Psoas muscle (tissue), 8 donors: ENCODE measurements at regions of chr13 and their contacts with region 1.

Region 1: DNA sequence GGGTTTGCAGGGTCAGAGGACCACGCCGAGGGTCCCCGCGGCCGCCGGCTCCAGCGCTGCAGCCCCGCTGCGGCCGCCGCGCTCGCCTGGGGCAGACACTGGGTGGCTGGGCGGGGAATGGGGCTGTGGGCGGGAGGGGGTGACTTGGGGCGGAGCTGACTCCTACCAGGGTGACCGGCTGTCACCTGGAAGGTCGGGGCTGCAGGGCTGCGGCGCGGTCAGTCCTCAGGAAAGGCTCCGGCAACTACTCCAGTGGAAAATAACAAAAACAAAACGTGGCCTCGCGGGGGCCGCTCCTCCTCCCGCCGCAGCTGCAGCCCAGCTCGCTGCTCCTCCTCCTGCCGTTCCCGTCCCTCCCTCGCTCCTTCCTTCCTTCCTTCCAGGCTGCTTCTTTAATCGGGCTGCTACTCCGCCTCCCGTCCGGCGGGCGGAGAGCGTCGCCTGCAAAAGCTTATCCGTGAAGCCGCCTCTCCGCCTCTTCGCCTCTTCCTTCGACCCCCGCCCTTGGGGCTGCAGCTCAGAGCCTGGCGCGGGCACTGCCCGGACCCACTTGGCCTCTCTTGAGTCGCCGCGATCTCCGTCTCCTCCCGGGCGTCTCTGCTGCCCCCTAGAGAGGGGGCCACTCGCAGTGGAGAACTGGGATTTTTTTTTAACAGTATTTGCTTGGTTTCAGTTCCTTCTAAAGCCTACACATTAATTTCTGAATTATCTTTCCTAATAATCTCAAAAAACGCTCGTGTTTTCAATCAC is at the start of gene TBC1D4:
- DNase-seq: peak; percentile 84 to 94
- ATAC-seq: peak; percentile 78 to 87 (median 80)
- H3K4me3 ChIP-seq: peak within 1 kb of the TSS; percentile 96
- H3K27ac ChIP-seq: peak within 1 kb of the TSS; percentile 96
- H3K4me1 ChIP-seq: peaks cover 29% of the 10 kb centered on the region
- H3K27me3 ChIP-seq: no peaks in the 10 kb centered on the region
- CTCF ChIP-seq: peak; percentile 81
- total RNA-seq, gene TBC1D4: 36.9 to 127 (median 93.4) TPM

Region 2: GRCh38 chr13:75372517-75372916 is 109.7 kb before region 1 on chr13:
- intact Hi-C with region 1: loop called (anchors 2 kb)
- DNase-seq: no peak
- ATAC-seq: peak; percentile 44 to 61 (median 47)
- H3K4me3 ChIP-seq: peak overlapping the region; percentile 4
- H3K27ac ChIP-seq: peak overlapping the region; percentile 93
- H3K4me1 ChIP-seq: peaks cover 81% of the 10 kb centered on the region
- H3K27me3 ChIP-seq: no peaks in the 10 kb centered on the region
- CTCF ChIP-seq: peak; percentile 78

Region 3: GRCh38 chr13:75437582-75438318 is 44.5 kb before region 1 on chr13:
- intact Hi-C with region 1: loop called in 1 of 2 experiments (anchors 5 kb)
- DNase-seq: no peak
- ATAC-seq: peak in 1 of 4 donors; percentile 41
- H3K4me3 ChIP-seq: peak overlapping the region; percentile 27
- H3K27ac ChIP-seq: peak overlapping the region; percentile 68
- H3K4me1 ChIP-seq: peaks cover 54% of the 10 kb centered on the region
- H3K27me3 ChIP-seq: no peaks in the 10 kb centered on the region
- CTCF ChIP-seq: no peak

Region 4: DNA sequence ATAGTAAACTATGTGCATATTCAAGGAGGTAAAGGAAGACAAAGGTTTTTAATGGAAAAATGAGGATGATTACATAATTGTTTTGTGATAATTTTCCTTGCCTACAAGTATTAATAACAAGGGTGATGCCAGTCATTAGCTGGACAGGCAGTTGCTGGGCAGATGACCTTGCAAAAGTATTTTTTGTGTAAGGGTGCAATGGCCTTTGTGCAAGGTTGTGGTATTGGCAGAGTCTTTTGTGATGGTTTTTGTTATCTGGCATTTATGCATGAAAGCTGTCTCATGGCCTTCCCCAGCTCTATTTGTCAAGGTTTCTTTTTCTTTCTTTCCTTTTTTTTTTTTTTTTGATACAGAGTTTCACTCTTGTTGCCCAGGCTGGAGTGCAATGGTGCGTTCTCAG is 59.7 kb after region 1 on chr13:
- intact Hi-C with region 1: loop called (anchors 2 to 5 kb)
- DNase-seq: no peak
- ATAC-seq: no peak
- H3K4me3 ChIP-seq: no peak overlapping the region
- H3K27ac ChIP-seq: no peak overlapping the region
- H3K4me1 ChIP-seq: peaks cover 5% of the 10 kb centered on the region
- H3K27me3 ChIP-seq: no peaks in the 10 kb centered on the region
- CTCF ChIP-seq: no peak

Region 5: GRCh38 chr13:75549262-75550158 is 67.3 kb after region 1 on chr13 and contains the start of gene UCHL3:
- intact Hi-C with region 1: loop called in 1 of 2 experiments (anchors 5 kb)
- DNase-seq: peak; percentile 97 to 99
- ATAC-seq: peak; percentile 97
- H3K4me3 ChIP-seq: peak within 1 kb of the TSS; percentile 85
- H3K27ac ChIP-seq: peak within 1 kb of the TSS; percentile 92
- H3K4me1 ChIP-seq: peaks cover 14% of the 10 kb centered on the region
- H3K27me3 ChIP-seq: no peaks in the 10 kb centered on the region
- CTCF ChIP-seq: peak; percentile 87
- total RNA-seq, gene UCHL3: 33.8 to 52.3 (median 40.2) TPM